Thyroid gland (tissue), 4 donors: ENCODE measurements at regions of chr4 and their contacts with region 1.

Region 1: GRCh38 chr4:1721004-1721665 is at the starts of genes TACC3 and TMEM129:
- DNase-seq: peak; percentile 98
- H3K4me3 ChIP-seq: peak within 1 kb of the TSS; percentile 21 to 72 (median 63)
- H3K27ac ChIP-seq: peak within 1 kb of the TSS; percentile 72 to 93 (median 88)
- H3K4me1 ChIP-seq: peaks cover 13 to 25% of the 10 kb centered on the region in 2 donors
- H3K27me3 ChIP-seq: no peaks in the 10 kb centered on the region
- CTCF ChIP-seq: peak in 1 of 6 experiments; percentile 14
- POLR2A ChIP-seq: peak in 1 of 2 donors; percentile 89
- total RNA-seq, gene TACC3: 4.8 to 10.3 (median 5.1) TPM
- total RNA-seq, gene TMEM129: 64.8 to 138 (median 106) TPM

Region 2: DNA sequence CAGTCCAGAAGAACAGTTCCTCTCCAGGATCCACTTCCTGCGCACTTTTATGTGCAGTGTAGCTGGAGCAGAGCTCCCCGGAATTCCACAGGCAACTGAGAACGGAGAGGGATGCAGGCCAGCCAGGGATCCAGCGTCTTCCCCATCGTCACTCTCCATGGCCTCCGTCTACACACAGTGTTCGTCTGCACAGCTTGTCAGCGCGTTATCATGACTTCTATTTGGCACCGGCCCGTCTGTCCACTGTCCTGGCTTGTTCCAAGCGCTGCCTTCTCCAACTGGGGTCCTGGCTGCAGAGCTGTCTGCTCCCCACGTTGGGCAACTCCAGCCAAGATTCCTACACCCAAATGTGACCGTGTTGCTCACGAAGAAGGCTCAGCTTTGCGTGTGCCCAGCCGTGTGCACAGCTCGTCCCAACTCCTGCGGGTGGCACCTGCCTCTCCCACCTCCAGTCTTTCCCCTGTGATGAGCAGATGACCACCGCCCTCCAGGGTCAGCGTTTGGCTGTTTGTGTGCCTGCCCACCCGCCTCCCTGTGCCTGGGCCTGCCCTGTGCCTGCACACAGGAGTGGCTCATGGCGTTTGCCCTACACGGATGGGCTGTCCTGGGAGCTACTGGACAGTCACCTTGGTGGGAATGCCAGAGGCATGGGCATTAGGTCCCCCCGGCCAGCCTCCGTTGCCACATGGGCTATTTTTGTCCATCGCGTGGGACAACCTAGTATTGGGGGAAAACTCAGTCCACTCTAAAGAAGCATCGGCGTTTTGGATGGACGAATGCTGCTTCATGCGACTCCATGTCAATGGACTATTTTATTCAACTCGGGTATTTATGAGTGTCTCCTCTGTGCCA is 470.0 kb before region 1 on chr4:
- intact Hi-C with region 1: no loop called
- DNase-seq: no peak
- H3K4me3 ChIP-seq: no peak overlapping the region
- H3K27ac ChIP-seq: no peak overlapping the region
- H3K4me1 ChIP-seq: peaks cover 21 to 27% of the 10 kb centered on the region in 2 donors
- H3K27me3 ChIP-seq: no peaks in the 10 kb centered on the region
- CTCF ChIP-seq: no peak
- POLR2A ChIP-seq: no peak

Region 3: DNA sequence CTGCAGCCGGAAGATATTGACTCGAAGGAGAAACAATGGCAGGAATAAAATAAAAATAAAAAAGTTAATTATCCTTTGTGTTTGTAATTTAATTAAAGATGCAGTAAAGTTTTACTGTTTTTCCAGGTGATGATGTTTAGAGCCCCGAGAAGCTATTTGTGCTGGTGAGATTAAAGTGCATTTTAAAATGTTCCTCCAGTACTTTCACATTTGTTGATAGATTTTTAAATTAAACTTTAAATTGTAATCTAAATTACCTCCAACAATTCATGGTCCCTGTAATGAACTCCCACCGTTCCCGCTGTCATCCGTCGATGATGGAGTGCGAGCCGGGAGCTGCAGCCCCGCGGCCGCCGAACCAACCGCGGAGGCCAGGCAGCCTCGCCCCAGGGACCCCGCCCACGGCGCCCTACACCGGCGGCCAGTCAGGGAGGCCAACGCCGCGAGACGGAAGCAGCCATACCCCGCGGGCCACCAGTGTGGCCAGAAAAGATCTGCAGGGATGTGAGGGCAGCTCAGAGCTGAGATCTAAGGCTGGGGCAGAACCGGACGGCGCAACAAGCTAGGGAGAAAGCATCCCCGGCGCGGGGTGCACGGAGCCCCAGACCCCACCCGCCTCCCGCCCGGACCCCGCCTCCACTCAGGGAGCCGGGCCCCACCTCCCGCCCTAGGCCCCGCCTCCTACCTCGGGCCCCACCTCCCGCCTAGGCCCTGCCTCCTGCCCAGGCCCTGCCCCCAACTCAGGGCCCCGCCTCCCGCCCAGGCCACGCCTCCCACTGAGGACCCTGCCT is 141.0 kb before region 1 on chr4:
- intact Hi-C with region 1: loop called (anchors 5 kb)
- DNase-seq: peak; percentile 73 to 83
- H3K4me3 ChIP-seq: peak overlapping the region in 2 of 3 donors; percentile 50 to 51
- H3K27ac ChIP-seq: peak overlapping the region; percentile 9 to 75 (median 75)
- H3K4me1 ChIP-seq: peaks cover 10% of the 10 kb centered on the region in 2 donors
- H3K27me3 ChIP-seq: no peaks in the 10 kb centered on the region
- CTCF ChIP-seq: no peak
- POLR2A ChIP-seq: no peak

Region 4: DNA sequence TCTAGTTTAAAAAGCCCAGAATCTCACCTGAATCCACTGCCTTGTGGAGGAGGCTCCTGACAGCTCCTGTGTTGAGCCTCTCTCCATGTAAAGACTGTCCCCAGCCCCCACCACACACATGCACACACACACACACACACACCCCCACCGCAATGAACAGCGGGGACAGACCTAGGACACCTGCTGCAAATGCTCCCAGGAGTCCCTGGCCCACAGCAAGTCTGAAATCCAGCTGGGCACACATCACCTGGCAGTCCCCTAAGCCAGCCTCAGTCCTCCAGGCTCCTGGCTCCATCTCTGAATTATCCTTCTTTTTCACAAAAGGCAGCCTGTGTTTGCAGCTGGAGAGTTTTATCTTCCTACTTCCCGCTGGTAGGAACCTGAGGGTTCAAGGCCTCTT is 30.4 kb before region 1 on chr4:
- intact Hi-C with region 1: loop called (anchors 2 kb)
- DNase-seq: no peak
- H3K4me3 ChIP-seq: no peak overlapping the region
- H3K27ac ChIP-seq: no peak overlapping the region
- H3K4me1 ChIP-seq: peaks cover 0 to 3% of the 10 kb centered on the region in 2 donors
- H3K27me3 ChIP-seq: no peaks in the 10 kb centered on the region
- CTCF ChIP-seq: no peak
- POLR2A ChIP-seq: no peak

Region 5: GRCh38 chr4:2080429-2081300 is 359.5 kb after region 1 on chr4:
- intact Hi-C with region 1: no loop called
- DNase-seq: no peak
- H3K4me3 ChIP-seq: no peak overlapping the region
- H3K27ac ChIP-seq: no peak overlapping the region
- H3K4me1 ChIP-seq: no peaks in the 10 kb centered on the region
- H3K27me3 ChIP-seq: no peaks in the 10 kb centered on the region
- CTCF ChIP-seq: no peak
- POLR2A ChIP-seq: no peak